Activated naive CD4-positive, alpha-beta T cell treated with anti-CD3 and anti-CD28 coated beads, Interleukin-2, amount 10 ng/mL, durations not matched to agents 7 days and 5 days (primary cell): ENCODE measurements at regions of chr5 and their contacts with region 1.

Region 1: DNA sequence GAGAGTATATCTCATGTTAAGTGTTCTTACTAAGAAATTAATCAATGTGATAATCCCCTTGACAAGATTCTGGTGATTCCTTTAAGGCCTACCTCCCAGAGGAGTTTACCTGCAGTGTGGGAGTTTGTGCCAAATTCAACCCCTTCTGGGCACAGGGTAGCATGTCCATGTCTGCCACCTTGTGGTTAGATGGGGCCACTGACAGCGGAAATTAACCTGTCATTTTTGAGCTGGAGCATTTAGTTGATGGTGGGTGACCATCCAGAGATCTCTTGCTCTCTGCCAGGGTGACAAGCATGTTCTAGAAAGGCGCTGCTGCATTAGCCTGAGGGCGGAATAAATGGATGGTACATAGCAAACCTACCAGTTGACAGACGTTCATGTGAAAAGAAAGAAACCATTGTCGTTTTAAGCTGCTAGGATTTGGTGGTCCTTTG is 132.2 kb downstream of the FBXO4 start:
- DNase-seq: peak; percentile 66
- H3K4me3 Mint-ChIP-seq: no peak overlapping the region
- H3K27ac Mint-ChIP-seq: no peak overlapping the region
- H3K4me1 Mint-ChIP-seq: no peaks in the 10 kb centered on the region
- H3K27me3 Mint-ChIP-seq: peaks cover 4% of the 10 kb centered on the region

Region 2: GRCh38 chr5:41695920-41696582 is 361.2 kb before region 1 on chr5:
- CTCF ChIA-PET with region 1: interaction called, 10 read pairs
- DNase-seq: no peak
- H3K4me3 Mint-ChIP-seq: no peak overlapping the region
- H3K27ac Mint-ChIP-seq: no peak overlapping the region
- H3K4me1 Mint-ChIP-seq: no peaks in the 10 kb centered on the region
- H3K27me3 Mint-ChIP-seq: no peaks in the 10 kb centered on the region

Region 3: GRCh38 chr5:41856644-41857491 is 200.4 kb before region 1 on chr5:
- CTCF ChIA-PET with region 1: interaction called, 143 read pairs
- DNase-seq: peak; percentile 69
- H3K4me3 Mint-ChIP-seq: no peak overlapping the region
- H3K27ac Mint-ChIP-seq: no peak overlapping the region
- H3K4me1 Mint-ChIP-seq: peaks cover 9% of the 10 kb centered on the region
- H3K27me3 Mint-ChIP-seq: no peaks in the 10 kb centered on the region

Region 4: GRCh38 chr5:41863871-41864486 is 193.3 kb before region 1 on chr5:
- CTCF ChIA-PET with region 1: interaction called, 143 read pairs
- DNase-seq: no peak
- H3K4me3 Mint-ChIP-seq: no peak overlapping the region
- H3K27ac Mint-ChIP-seq: no peak overlapping the region
- H3K4me1 Mint-ChIP-seq: peaks cover 55% of the 10 kb centered on the region
- H3K27me3 Mint-ChIP-seq: no peaks in the 10 kb centered on the region

Region 5: DNA sequence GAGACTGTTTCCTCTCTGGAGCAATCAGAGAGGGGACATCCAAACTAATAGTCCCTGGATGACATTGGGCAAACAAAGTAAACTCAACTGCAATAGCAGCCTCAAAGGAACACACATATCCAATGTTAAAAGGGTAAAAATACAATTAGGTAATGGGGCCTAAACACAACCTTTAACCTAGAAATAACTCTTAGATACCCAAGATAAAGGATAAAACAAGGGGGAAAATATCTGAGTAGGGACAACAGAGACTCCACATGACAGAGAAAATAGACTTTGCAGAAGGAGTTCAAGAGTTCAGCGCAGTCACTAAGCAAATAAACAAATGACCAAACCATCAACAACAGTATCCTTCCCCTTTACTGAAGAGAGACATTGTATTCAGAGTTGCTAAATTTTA is 17.1 kb after region 1 on chr5:
- CTCF ChIA-PET with region 1: no interaction called
- DNase-seq: no peak
- H3K4me3 Mint-ChIP-seq: no peak overlapping the region
- H3K27ac Mint-ChIP-seq: no peak overlapping the region
- H3K4me1 Mint-ChIP-seq: no peaks in the 10 kb centered on the region
- H3K27me3 Mint-ChIP-seq: peaks cover 3% of the 10 kb centered on the region